Astrocyte of the cerebellum (primary cell): ENCODE measurements at regions of chr6 and their contacts with region 1.

Region 1: DNA sequence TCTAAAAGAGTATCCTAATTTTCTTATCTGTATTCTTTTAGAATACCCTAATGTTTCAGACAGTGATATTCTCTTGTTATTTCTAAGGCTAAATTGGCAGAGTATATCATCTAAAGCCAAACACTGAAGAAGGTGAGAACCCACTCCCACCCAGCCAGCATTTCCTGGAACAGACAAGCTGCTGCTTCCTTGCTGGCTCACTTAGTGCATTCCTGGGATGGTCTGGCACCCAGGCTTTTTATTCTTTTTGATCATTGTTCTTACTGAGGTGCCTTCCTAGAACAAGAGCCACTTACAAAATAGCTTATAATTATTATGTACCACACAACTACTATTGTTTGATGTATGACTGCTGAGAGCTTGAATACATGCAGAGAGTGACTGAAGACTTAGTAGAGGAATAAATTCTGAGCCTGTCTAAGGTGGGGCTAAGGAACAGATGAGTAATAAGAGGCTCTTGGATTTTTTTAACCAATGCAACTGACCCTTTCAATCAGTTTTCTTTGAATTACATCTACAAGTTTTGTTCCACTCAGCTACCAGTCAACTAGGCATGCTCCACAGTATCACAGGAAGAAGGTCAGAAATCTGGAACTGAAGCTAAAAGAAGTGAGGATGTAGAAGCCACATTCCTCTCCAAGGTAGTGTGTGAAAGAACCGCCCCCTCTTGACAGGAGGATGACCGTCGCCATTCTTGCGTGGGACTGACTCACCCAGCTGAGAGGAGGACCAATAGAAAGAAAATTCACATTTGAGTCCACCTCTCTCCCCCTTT is 30.1 kb downstream of the PRPH2 start:
- DNase-seq: no peak
- H3K4me3 ChIP-seq: no peak overlapping the region
- CTCF ChIP-seq: no peak

Region 2: GRCh38 chr6:42652024-42652746 is 40.1 kb before region 1 on chr6:
- in situ Hi-C with region 1: loop called (anchors 5 kb)
- DNase-seq: no peak
- H3K4me3 ChIP-seq: no peak overlapping the region
- CTCF ChIP-seq: no peak

Region 3: GRCh38 chr6:42782622-42783176 is 90.4 kb after region 1 on chr6:
- in situ Hi-C with region 1: loop called (anchors 5 kb)
- DNase-seq: peak; percentile 73
- H3K4me3 ChIP-seq: peak overlapping the region; percentile 72
- CTCF ChIP-seq: no peak